ENCODE measurements at regions of chr15 and their contacts with region 1.

Region 1: GRCh38 chr15:90400406-90401314 is 12.6 kb downstream of the IQGAP1 start:
- DNase-seq: peak; percentile 79 to 91 (median 88)
- H3K4me3 ChIP-seq: peak overlapping the region in 1 of 2 donors; percentile 3
- H3K4me3 Mint-ChIP-seq: peak overlapping the region; percentile 75 to 88 (median 80)
- H3K27ac ChIP-seq: peak overlapping the region; percentile 93
- H3K27ac Mint-ChIP-seq: peak overlapping the region; percentile 97 to 100 (median 99)
- H3K4me1 ChIP-seq: peaks cover 72% of the 10 kb centered on the region
- H3K4me1 Mint-ChIP-seq: peaks cover 49 to 76% (median 60%) of the 10 kb centered on the region in 4 donors
- H3K27me3 ChIP-seq: no peaks in the 10 kb centered on the region
- H3K27me3 Mint-ChIP-seq: no peaks in the 10 kb centered on the region

Region 2: GRCh38 chr15:90376789-90377188 is 23.9 kb before region 1 on chr15:
- CTCF ChIA-PET with region 1: interaction called, 12 read pairs
- POLR2A ChIA-PET with region 1: interaction called, 12 read pairs
- intact Hi-C with region 1: no loop called
- DNase-seq: peak; percentile 78 to 83 (median 80)
- H3K4me3 ChIP-seq: peak overlapping the region in 1 of 2 donors; percentile 11
- H3K4me3 Mint-ChIP-seq: peak overlapping the region; percentile 58 to 86 (median 73)
- H3K27ac ChIP-seq: no peak overlapping the region
- H3K27ac Mint-ChIP-seq: peak overlapping the region; percentile 41 to 95 (median 65)
- H3K4me1 ChIP-seq: peaks cover 46% of the 10 kb centered on the region
- H3K4me1 Mint-ChIP-seq: peaks cover 21 to 53% (median 43%) of the 10 kb centered on the region in 4 donors
- H3K27me3 ChIP-seq: no peaks in the 10 kb centered on the region
- H3K27me3 Mint-ChIP-seq: no peaks in the 10 kb centered on the region